Activated CD4-positive, alpha-beta T cell treated with anti-CD3 and anti-CD28 coated beads for 36 hours (primary cell): ENCODE measurements at regions of chr1 and their contacts with region 1.

Region 1: GRCh38 chr1:6579374-6580118 is at the start of gene ZBTB48:
- DNase-seq: peak; percentile 99
- ATAC-seq: peak; percentile 99
- H3K4me3 Mint-ChIP-seq: peak within 1 kb of the TSS; percentile 92
- H3K27ac Mint-ChIP-seq: peak within 1 kb of the TSS; percentile 89
- H3K4me1 Mint-ChIP-seq: peaks cover 30% of the 10 kb centered on the region
- H3K27me3 Mint-ChIP-seq: no peaks in the 10 kb centered on the region
- total RNA-seq, gene ZBTB48: 23.2 to 26.0 TPM

Region 2: DNA sequence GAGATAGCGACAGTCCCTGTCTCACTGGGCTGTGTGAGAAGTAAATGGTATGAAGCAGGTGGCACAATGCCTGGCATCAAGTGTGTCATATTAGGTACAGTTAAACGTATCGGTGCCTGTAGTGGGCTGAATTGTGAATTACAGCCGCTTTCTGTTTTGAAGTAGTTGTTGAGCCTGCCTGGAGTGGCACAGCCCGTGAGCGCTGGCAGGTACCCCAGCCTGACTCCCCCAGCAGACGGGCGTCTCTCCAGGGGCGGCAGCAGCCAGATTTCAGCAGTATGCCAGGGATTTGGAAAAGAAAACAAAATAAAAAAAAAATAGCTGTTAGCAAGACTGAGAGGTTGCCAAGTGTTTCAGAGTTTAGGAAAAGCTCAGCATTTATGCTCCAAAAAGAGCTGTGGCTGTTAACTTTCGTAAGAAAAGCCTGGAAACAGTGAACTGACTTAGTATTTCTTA is 292.1 kb before region 1 on chr1:
- CTCF ChIA-PET with region 1: no interaction called
- POLR2A ChIA-PET with region 1: no interaction called
- intact Hi-C with region 1: no loop called
- DNase-seq: no peak
- ATAC-seq: no peak
- H3K4me3 Mint-ChIP-seq: no peak overlapping the region
- H3K27ac Mint-ChIP-seq: no peak overlapping the region
- H3K4me1 Mint-ChIP-seq: no peaks in the 10 kb centered on the region
- H3K27me3 Mint-ChIP-seq: no peaks in the 10 kb centered on the region

Region 3: GRCh38 chr1:6485168-6486101 is 94.1 kb before region 1 on chr1:
- CTCF ChIA-PET with region 1: no interaction called
- POLR2A ChIA-PET with region 1: no interaction called
- intact Hi-C with region 1: no loop called
- DNase-seq: no peak
- ATAC-seq: no peak
- H3K4me3 Mint-ChIP-seq: no peak overlapping the region
- H3K27ac Mint-ChIP-seq: no peak overlapping the region
- H3K4me1 Mint-ChIP-seq: peaks cover 7% of the 10 kb centered on the region
- H3K27me3 Mint-ChIP-seq: peaks cover 24% of the 10 kb centered on the region

Region 4: DNA sequence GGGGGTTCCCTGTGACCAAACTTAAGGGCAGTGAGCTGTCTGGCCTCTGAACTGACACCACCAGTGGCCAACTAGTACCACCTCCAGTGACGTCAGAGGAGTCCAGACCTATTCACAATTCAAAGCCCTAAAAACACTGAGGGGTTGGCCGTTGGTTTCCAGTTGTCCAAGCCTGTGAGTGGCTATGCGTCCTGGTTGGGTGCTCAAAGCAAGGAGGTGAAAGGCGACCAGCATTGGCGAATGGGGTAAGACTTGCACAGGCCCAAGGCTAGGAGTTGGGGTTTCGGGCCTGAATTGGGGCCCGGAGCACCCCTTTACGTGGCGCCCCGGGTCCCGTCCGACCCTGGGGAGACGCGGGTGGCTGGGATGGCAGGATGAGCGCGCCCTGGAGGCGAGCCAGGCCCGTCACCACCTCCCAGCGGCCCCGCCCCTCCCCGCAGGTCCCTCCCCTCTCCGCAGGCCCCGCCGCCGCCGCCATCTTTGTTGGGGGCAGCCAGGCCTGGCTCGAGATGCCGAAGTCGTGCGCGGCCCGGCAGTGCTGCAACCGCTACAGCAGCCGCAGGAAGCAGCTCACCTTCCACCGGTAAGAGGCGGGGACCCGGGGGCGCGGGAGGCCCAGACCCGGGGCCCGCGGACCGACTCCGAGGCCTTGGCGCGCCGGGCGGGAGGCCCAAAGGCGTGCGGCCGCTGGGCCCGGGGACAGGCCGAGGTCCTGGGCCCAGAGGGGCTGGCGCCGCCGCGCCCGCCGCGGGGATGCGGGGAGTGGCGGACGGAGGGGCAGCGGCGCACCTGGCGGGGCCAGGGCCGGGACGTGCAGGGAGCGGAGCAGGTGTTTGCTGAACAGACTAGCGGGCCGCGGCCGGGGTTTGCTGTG is 45.4 kb after region 1 on chr1 and contains the start of gene THAP3:
- CTCF ChIA-PET with region 1: interaction called, 5 read pairs
- POLR2A ChIA-PET with region 1: no interaction called
- intact Hi-C with region 1: loop called (anchors 1 kb)
- DNase-seq: peak; percentile 96
- ATAC-seq: peak; percentile 98
- H3K4me3 Mint-ChIP-seq: peak within 1 kb of the TSS; percentile 85
- H3K27ac Mint-ChIP-seq: peak within 1 kb of the TSS; percentile 78
- H3K4me1 Mint-ChIP-seq: peaks cover 28% of the 10 kb centered on the region
- H3K27me3 Mint-ChIP-seq: no peaks in the 10 kb centered on the region
- total RNA-seq, gene THAP3: 19.4 to 22.1 TPM